ENCODE measurements at regions of chr21 and their contacts with region 1.

Region 1: DNA sequence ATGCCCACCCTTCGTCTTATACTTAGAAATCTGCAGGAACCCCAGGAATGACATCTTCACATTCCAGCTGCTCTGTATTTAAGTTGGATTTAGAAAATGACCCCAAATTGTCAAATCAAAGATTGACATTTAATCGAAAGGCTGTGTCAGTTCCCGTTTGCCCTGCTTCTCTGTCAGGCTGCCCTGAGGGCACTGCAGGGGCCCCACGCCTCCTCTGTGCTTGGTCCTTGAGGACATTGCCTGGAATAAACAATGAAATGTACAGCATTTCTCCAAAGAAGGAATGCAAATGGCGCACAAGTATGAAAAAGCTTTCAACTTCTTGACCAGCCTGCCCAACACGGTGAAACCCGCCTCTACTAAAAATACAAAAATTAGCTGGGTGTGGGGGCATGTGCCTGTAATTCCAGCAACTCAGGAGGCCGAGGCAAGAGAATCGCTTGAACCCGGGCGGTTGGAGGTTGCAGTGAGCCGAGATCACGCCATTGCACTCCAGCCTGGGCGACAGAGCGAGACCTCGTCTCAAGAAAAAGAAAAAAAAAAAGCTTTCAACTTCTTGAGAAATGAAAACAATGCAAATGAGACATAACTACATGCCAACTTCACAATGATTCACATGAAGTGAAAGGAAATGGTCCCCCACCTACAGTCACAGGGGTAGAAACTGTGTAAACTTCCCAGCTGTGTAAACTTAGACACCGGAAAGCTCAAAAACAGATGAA is 3.0 kb downstream of the TMPRSS3 start:
- DNase-seq: no peak
- ATAC-seq: no peak
- H3K4me3 ChIP-seq: no peak overlapping the region
- H3K27ac ChIP-seq: no peak overlapping the region
- H3K4me1 ChIP-seq: peaks cover 13 to 16% of the 10 kb centered on the region in 2 experiments; a peak in 3 of 5 replicates
- H3K27me3 ChIP-seq: peaks cover 7 to 14% of the 10 kb centered on the region in 2 experiments
- CTCF ChIP-seq: no peak
- EP300 ChIP-seq: no peak
- POLR2A ChIP-seq: no peak
- RAD21 ChIP-seq: no peak

Region 2: GRCh38 chr21:42403611-42404231 is 10.8 kb after region 1 on chr21 and contains the start of gene UBASH3A:
- CTCF ChIA-PET with region 1: no interaction called
- POLR2A ChIA-PET with region 1: interaction called, 13 read pairs
- in situ Hi-C with region 1: no loop called
- intact Hi-C with region 1: no loop called
- DNase-seq: peak; percentile 60 to 89 (median 74)
- ATAC-seq: peak; percentile 90
- H3K4me3 ChIP-seq: peak within 1 kb of the TSS; percentile 2; the same call in 1 of the 2 replicates
- H3K27ac ChIP-seq: peak within 1 kb of the TSS; percentile 67
- H3K4me1 ChIP-seq: peaks cover 35 to 37% of the 10 kb centered on the region in 2 experiments
- H3K27me3 ChIP-seq: no peaks in the 10 kb centered on the region
- CTCF ChIP-seq: no peak
- EP300 ChIP-seq: peak; percentile 84
- POLR2A ChIP-seq: 0 out of 2 replicates have a peak, but pooled peaks have one; percentile 32
- RAD21 ChIP-seq: no peak
- polyA plus RNA-seq, gene UBASH3A: 0.23 to 0.25 TPM

Measured in K562 (cell line).